T-cell (primary cell): ENCODE measurements at regions of chr4 and their contacts with region 1.

Region 1: DNA sequence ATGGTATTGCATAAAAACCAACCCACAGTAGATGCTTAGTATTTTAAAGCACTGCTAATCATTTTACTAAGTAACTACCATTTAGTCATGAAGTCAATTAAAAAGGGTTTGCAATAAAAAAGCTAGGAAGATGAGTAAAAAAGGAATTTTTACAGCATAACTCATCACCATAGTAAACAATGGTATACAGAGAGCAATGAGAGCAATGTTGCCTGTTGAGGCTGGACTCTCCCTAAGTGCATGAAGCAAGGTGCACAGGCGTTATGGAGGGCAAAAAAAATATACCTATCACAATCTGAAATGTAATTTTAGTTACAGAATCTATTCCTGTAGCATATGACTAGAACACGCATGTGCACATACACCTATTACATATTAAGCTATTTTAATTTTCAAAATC is 129.6 kb upstream of the BMP3 start:
- DNase-seq: no peak
- ATAC-seq: no peak
- H3K4me3 ChIP-seq: no peak overlapping the region
- H3K4me3 Mint-ChIP-seq: no peak overlapping the region
- H3K27ac ChIP-seq: no peak overlapping the region
- H3K27ac Mint-ChIP-seq: no peak overlapping the region
- H3K4me1 ChIP-seq: no peaks in the 10 kb centered on the region
- H3K4me1 Mint-ChIP-seq: peaks cover 0 to 2% (median 0%) of the 10 kb centered on the region in 3 donors
- H3K27me3 ChIP-seq: no peaks in the 10 kb centered on the region
- H3K27me3 Mint-ChIP-seq: no peaks in the 10 kb centered on the region

Region 2: GRCh38 chr4:79065262-79065661 is 1835.6 kb before region 1 on chr4:
- CTCF ChIA-PET with region 1: no interaction called
- POLR2A ChIA-PET with region 1: interaction called in 1 of 2 experiments, 11 read pairs
- DNase-seq: no peak
- ATAC-seq: no peak
- H3K4me3 ChIP-seq: no peak overlapping the region
- H3K4me3 Mint-ChIP-seq: no peak overlapping the region
- H3K27ac ChIP-seq: no peak overlapping the region
- H3K27ac Mint-ChIP-seq: no peak overlapping the region
- H3K4me1 ChIP-seq: no peaks in the 10 kb centered on the region
- H3K4me1 Mint-ChIP-seq: no peaks in the 10 kb centered on the region
- H3K27me3 ChIP-seq: no peaks in the 10 kb centered on the region
- H3K27me3 Mint-ChIP-seq: peaks cover 0 to 8% of the 10 kb centered on the region in 2 donors

Region 3: DNA sequence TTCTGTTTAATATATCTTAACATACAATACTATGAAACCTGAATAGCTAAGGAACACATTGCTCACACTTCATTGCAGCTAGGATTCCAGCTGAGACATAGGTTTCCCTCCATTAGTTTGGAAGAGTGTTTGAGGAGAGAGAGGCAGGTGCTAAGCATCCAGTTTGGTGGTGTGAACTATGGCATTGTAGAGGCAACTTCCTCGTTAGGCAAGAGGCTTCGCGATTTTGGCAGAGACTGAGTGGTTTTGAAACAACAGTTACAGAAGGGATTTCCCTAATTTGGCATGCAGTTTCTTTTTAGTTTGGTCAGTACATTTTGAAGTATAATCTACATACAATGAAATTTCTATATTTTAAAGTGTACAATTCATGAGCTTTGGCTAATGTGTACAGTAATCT is 12.5 kb after region 1 on chr4:
- CTCF ChIA-PET with region 1: no interaction called
- POLR2A ChIA-PET with region 1: no interaction called
- DNase-seq: no peak
- ATAC-seq: no peak
- H3K4me3 ChIP-seq: no peak overlapping the region
- H3K4me3 Mint-ChIP-seq: no peak overlapping the region
- H3K27ac ChIP-seq: no peak overlapping the region
- H3K27ac Mint-ChIP-seq: no peak overlapping the region
- H3K4me1 ChIP-seq: no peaks in the 10 kb centered on the region
- H3K4me1 Mint-ChIP-seq: no peaks in the 10 kb centered on the region
- H3K27me3 ChIP-seq: no peaks in the 10 kb centered on the region
- H3K27me3 Mint-ChIP-seq: peaks cover 3 to 4% of the 10 kb centered on the region in 2 donors

Region 4: GRCh38 chr4:81724925-81725329 is 824.0 kb after region 1 on chr4:
- CTCF ChIA-PET with region 1: no interaction called
- POLR2A ChIA-PET with region 1: no interaction called
- DNase-seq: peak in 25 of 35 experiments; percentile 2 to 43 (median 10)
- ATAC-seq: peak; percentile 61 to 87 (median 70)
- H3K4me3 ChIP-seq: no peak overlapping the region
- H3K4me3 Mint-ChIP-seq: no peak overlapping the region
- H3K27ac ChIP-seq: no peak overlapping the region
- H3K27ac Mint-ChIP-seq: peak overlapping the region in 1 of 2 donors; percentile 25
- H3K4me1 ChIP-seq: peaks cover 0 to 10% of the 10 kb centered on the region in 2 experiments
- H3K4me1 Mint-ChIP-seq: peaks cover 16 to 19% (median 17%) of the 10 kb centered on the region in 3 donors
- H3K27me3 ChIP-seq: peaks cover 0 to 3% of the 10 kb centered on the region in 2 experiments
- H3K27me3 Mint-ChIP-seq: peaks cover 0 to 8% of the 10 kb centered on the region in 2 donors